Esophagus squamous epithelium (tissue), 5 donors: ENCODE measurements at regions of chr1 and their contacts with region 1.

Region 1: GRCh38 chr1:180643693-180644092 is 11.9 kb downstream of the XPR1 start:
- DNase-seq: no peak
- H3K4me3 ChIP-seq: no peak overlapping the region
- H3K27ac ChIP-seq: no peak overlapping the region
- H3K4me1 ChIP-seq: peaks cover 0 to 6% (median 0%) of the 10 kb centered on the region in 3 donors
- H3K27me3 ChIP-seq: no peaks in the 10 kb centered on the region
- CTCF ChIP-seq: no peak
- POLR2A ChIP-seq: no peak

Region 2: DNA sequence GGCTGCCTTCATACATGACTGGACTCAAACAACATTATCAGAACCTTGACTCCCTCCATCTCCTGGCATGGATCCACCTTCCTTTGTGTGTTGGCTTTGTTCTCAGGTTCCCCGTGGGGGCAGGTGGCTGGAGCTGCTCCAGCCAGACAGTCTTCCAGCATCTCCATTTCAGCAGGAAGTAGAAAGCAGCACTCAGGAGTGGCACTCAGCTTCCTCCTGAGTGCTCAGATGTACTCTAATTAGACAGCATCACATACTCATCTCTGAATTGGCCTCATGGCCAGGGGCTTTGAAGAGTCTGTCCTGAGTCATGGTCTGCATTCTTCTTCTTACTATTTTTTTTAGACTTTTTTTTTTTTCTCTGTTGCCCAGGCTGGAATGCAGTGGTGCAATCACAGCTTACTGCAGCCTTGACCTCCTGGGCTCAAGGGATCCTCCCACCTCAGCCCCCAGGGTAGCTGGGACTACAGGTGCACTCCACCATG is 57.0 kb before region 1 on chr1:
- intact Hi-C with region 1: no loop called
- DNase-seq: no peak
- H3K4me3 ChIP-seq: no peak overlapping the region
- H3K27ac ChIP-seq: peak overlapping the region in 3 of 4 donors; percentile 77 to 83 (median 80)
- H3K4me1 ChIP-seq: peaks cover 12 to 27% (median 22%) of the 10 kb centered on the region in 3 donors
- H3K27me3 ChIP-seq: no peaks in the 10 kb centered on the region
- CTCF ChIP-seq: no peak
- POLR2A ChIP-seq: no peak

Region 3: DNA sequence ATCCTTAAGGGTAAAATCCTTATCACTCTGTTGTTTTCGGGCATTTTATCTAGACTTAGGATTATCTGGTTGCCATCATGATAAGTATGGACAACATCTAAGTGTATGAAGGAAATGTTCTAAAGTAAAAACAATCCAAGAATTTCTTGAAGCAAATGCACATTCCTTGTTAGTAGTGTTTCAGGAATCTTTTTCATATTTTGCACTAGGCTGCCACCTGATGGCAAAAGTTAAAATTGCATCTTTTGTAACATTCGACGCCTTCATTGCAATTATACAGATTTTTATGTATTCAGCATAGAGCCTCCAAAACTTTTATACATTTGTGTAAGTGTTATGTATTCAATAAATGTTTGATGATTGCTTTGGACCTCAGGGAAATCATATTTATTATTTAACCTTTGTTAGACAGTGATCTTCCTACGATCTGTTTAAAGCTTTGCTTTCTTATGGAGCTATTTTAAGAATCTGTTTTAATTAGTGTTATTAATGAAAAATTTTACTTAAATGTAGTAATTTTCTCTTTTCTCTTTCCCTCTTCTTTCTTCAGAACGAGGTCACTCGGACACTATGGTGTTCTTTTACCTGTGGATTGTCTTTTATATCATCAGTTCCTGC is 219.6 kb after region 1 on chr1:
- intact Hi-C with region 1: loop called (anchors 10 kb)
- DNase-seq: no peak
- H3K4me3 ChIP-seq: no peak overlapping the region
- H3K27ac ChIP-seq: no peak overlapping the region
- H3K4me1 ChIP-seq: no peaks in the 10 kb centered on the region
- H3K27me3 ChIP-seq: no peaks in the 10 kb centered on the region
- CTCF ChIP-seq: peak; percentile 47 to 81 (median 68)
- POLR2A ChIP-seq: no peak